Naive thymus-derived CD4-positive, alpha-beta T cell (primary cell): ENCODE measurements at regions of chr6 and their contacts with region 1.

Region 1: DNA sequence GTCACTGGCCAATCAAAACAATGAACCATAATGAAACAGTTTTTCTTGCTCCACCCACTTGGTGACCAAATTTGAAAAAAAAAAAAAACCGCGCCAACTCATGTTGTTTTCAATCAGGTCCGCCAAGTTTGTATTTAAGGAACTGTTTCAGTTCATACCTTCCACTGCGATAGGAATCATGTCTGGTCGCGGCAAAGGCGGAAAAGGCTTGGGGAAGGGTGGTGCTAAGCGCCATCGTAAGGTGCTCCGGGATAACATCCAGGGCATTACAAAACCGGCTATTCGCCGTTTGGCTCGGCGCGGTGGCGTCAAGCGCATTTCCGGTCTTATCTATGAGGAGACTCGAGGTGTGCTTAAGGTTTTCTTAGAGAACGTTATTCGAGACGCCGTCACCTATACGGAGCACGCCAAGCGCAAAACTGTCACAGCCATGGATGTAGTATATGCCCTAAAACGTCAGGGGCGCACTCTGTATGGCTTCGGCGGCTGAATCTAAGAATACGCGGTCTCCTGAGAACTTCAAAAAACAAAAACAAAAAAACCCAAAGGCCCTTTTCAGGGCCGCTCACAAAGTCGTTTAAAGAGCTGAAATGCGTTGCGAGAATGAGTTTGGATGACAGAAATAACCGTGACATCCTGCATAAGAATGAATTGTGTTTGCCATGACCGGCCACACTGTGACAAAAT is 16.7 kb downstream of the HFE start:
- DNase-seq: peak; percentile 83 to 96 (median 95)
- ATAC-seq: peak; percentile 94
- H3K4me3 ChIP-seq: peak overlapping the region; percentile 40
- H3K4me3 Mint-ChIP-seq: peak overlapping the region; percentile 81 to 97 (median 89)
- H3K27ac ChIP-seq: peak overlapping the region; percentile 75
- H3K27ac Mint-ChIP-seq: peak overlapping the region; percentile 96 to 100 (median 98)
- H3K4me1 ChIP-seq: peaks cover 4 to 12% of the 10 kb centered on the region in 2 donors
- H3K4me1 Mint-ChIP-seq: peaks cover 7 to 25% (median 22%) of the 10 kb centered on the region in 7 donors
- H3K27me3 ChIP-seq: no peaks in the 10 kb centered on the region
- H3K27me3 Mint-ChIP-seq: peaks cover 0 to 3% (median 0%) of the 10 kb centered on the region in 5 donors

Region 2: DNA sequence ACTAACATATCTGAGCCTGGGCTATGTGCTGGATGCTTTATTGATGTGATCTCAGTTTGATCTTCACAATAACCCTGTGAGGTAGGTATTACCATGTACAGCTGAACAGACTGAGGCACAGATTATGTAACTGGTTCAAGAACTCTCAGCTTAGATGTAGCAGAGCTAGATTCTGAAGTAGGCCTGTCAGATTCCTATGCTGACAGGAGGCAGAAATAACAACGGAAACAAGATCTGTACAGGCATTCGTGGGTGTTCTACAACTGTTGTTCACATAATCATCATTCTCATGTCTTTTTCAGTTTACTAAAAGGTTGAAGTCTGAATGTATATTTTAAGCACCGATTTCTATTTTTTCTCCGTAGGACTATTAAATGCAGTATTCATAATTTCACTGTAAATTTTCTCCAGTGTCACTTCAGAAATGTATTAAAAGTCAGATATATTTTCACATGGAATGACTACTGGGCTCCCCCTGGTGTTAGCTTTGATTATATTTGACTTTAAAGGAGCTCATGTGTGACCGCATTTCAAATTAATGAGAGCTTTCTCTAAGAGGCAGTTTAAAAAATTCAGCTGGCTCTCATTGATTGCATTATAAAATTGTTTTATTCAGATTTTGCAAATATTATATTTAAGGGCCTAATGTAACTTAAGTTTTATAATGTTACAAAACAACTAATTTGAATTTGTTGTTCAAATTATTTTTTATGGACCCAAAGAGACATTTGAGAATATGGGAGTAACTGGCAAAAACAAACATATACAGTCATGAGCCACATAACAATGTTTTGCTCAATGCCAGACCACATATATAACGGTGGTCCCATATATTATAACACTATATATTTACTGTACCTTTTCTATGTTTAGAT is 385.8 kb before region 1 on chr6:
- CTCF ChIA-PET with region 1: no interaction called
- POLR2A ChIA-PET with region 1: no interaction called
- intact Hi-C with region 1: no loop called
- DNase-seq: peak in 4 of 9 donors; percentile 4 to 14 (median 10)
- ATAC-seq: no peak
- H3K4me3 ChIP-seq: no peak overlapping the region
- H3K4me3 Mint-ChIP-seq: no peak overlapping the region
- H3K27ac ChIP-seq: no peak overlapping the region
- H3K27ac Mint-ChIP-seq: no peak overlapping the region
- H3K4me1 ChIP-seq: no peaks in the 10 kb centered on the region
- H3K4me1 Mint-ChIP-seq: no peaks in the 10 kb centered on the region
- H3K27me3 ChIP-seq: no peaks in the 10 kb centered on the region
- H3K27me3 Mint-ChIP-seq: peaks cover 0 to 32% (median 12%) of the 10 kb centered on the region in 5 donors

Region 3: GRCh38 chr6:26054857-26055669 is 48.9 kb before region 1 on chr6:
- CTCF ChIA-PET with region 1: interaction called, 232 read pairs
- POLR2A ChIA-PET with region 1: interaction called, 298 read pairs
- intact Hi-C with region 1: loop called (anchors 2 kb)
- DNase-seq: peak; percentile 54 to 94 (median 90)
- ATAC-seq: peak; percentile 81
- H3K4me3 ChIP-seq: peak overlapping the region; percentile 93
- H3K4me3 Mint-ChIP-seq: peak overlapping the region; percentile 88 to 99 (median 95)
- H3K27ac ChIP-seq: peak overlapping the region; percentile 83
- H3K27ac Mint-ChIP-seq: peak overlapping the region; percentile 95 to 99 (median 98)
- H3K4me1 ChIP-seq: peaks cover 0 to 14% of the 10 kb centered on the region in 2 donors
- H3K4me1 Mint-ChIP-seq: peaks cover 9 to 52% (median 10%) of the 10 kb centered on the region in 7 donors
- H3K27me3 ChIP-seq: no peaks in the 10 kb centered on the region
- H3K27me3 Mint-ChIP-seq: peaks cover 0 to 10% (median 0%) of the 10 kb centered on the region in 5 donors

Region 4: GRCh38 chr6:26087284-26088115 is 16.4 kb before region 1 on chr6 and contains the start of gene HFE:
- CTCF ChIA-PET with region 1: interaction called, 63 read pairs
- POLR2A ChIA-PET with region 1: interaction called, 44 read pairs
- intact Hi-C with region 1: no loop called
- DNase-seq: peak in 8 of 9 donors; percentile 32 to 46 (median 38)
- ATAC-seq: peak; percentile 41
- H3K4me3 ChIP-seq: peak within 1 kb of the TSS; percentile 88
- H3K4me3 Mint-ChIP-seq: peak within 1 kb of the TSS; percentile 84 to 91 (median 88)
- H3K27ac ChIP-seq: peak within 1 kb of the TSS; percentile 72
- H3K27ac Mint-ChIP-seq: peak within 1 kb of the TSS; percentile 73 to 91 (median 84)
- H3K4me1 ChIP-seq: peaks cover 18 to 23% of the 10 kb centered on the region in 2 donors
- H3K4me1 Mint-ChIP-seq: peaks cover 31 to 51% (median 39%) of the 10 kb centered on the region in 7 donors
- H3K27me3 ChIP-seq: no peaks in the 10 kb centered on the region
- H3K27me3 Mint-ChIP-seq: peaks cover 0 to 5% (median 5%) of the 10 kb centered on the region in 5 donors
- total RNA-seq, gene HFE: 1.5 to 4.6 (median 2.5) TPM

Region 5: GRCh38 chr6:26115226-26115625 is 11.3 kb after region 1 on chr6:
- CTCF ChIA-PET with region 1: no interaction called
- POLR2A ChIA-PET with region 1: interaction called, 55 read pairs
- intact Hi-C with region 1: no loop called
- DNase-seq: no peak
- ATAC-seq: no peak
- H3K4me3 ChIP-seq: no peak overlapping the region
- H3K4me3 Mint-ChIP-seq: peak overlapping the region in 1 of 10 donors; percentile 61
- H3K27ac ChIP-seq: no peak overlapping the region
- H3K27ac Mint-ChIP-seq: peak overlapping the region in 1 of 9 donors; percentile 72
- H3K4me1 ChIP-seq: peaks cover 0 to 7% of the 10 kb centered on the region in 2 donors
- H3K4me1 Mint-ChIP-seq: peaks cover 5 to 15% (median 9%) of the 10 kb centered on the region in 7 donors
- H3K27me3 ChIP-seq: no peaks in the 10 kb centered on the region
- H3K27me3 Mint-ChIP-seq: peaks cover 0 to 5% (median 0%) of the 10 kb centered on the region in 5 donors

Region 6: GRCh38 chr6:26183581-26184366 is 79.9 kb after region 1 on chr6:
- CTCF ChIA-PET with region 1: no interaction called
- POLR2A ChIA-PET with region 1: interaction called, 19 read pairs
- intact Hi-C with region 1: no loop called
- DNase-seq: peak; percentile 43 to 83 (median 77)
- ATAC-seq: peak; percentile 91
- H3K4me3 ChIP-seq: peak overlapping the region; percentile 82
- H3K4me3 Mint-ChIP-seq: peak overlapping the region; percentile 84 to 99 (median 98)
- H3K27ac ChIP-seq: peak overlapping the region; percentile 76
- H3K27ac Mint-ChIP-seq: peak overlapping the region; percentile 83 to 99 (median 90)
- H3K4me1 ChIP-seq: peaks cover 13 to 30% of the 10 kb centered on the region in 2 donors
- H3K4me1 Mint-ChIP-seq: peaks cover 19 to 59% (median 49%) of the 10 kb centered on the region in 7 donors
- H3K27me3 ChIP-seq: no peaks in the 10 kb centered on the region
- H3K27me3 Mint-ChIP-seq: no peaks in the 10 kb centered on the region

Region 7: GRCh38 chr6:26249957-26250697 is 146.2 kb after region 1 on chr6:
- CTCF ChIA-PET with region 1: no interaction called
- POLR2A ChIA-PET with region 1: interaction called, 9 read pairs
- intact Hi-C with region 1: loop called in 1 of 2 experiments (anchors 1 kb)
- DNase-seq: peak; percentile 53 to 85 (median 80)
- ATAC-seq: peak; percentile 85
- H3K4me3 ChIP-seq: peak overlapping the region; percentile 84
- H3K4me3 Mint-ChIP-seq: peak overlapping the region; percentile 88 to 100 (median 96)
- H3K27ac ChIP-seq: peak overlapping the region; percentile 71
- H3K27ac Mint-ChIP-seq: peak overlapping the region; percentile 85 to 97 (median 94)
- H3K4me1 ChIP-seq: peaks cover 4 to 19% of the 10 kb centered on the region in 2 donors
- H3K4me1 Mint-ChIP-seq: peaks cover 20 to 48% (median 39%) of the 10 kb centered on the region in 7 donors
- H3K27me3 ChIP-seq: no peaks in the 10 kb centered on the region
- H3K27me3 Mint-ChIP-seq: no peaks in the 10 kb centered on the region

Region 8: DNA sequence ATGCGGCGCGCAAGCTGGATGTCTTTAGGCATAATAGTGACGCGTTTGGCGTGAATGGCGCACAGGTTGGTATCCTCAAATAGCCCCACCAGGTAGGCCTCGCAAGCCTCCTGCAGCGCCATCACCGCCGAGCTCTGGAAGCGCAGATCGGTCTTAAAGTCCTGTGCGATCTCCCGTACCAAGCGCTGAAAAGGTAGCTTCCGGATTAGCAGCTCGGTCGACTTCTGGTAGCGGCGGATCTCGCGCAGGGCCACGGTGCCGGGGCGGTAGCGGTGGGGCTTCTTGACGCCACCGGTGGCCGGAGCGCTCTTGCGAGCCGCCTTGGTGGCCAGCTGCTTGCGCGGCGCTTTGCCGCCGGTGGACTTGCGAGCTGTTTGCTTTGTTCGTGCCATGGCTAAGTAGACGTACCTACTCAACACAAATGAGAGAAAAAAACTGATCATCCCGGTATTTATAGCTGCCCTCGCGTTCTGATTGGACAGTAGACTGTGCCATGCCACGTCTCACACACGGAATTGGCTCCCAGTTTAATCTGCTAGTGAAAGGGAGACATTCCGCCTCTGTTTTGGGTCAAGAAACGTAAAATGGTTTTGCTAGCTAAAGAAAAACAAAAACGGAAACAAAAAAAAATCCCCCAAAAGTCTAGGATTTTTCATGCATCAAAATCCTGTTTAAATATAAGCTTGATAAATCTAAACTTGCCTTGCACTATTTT is 1768.2 kb after region 1 on chr6:
- CTCF ChIA-PET with region 1: no interaction called
- POLR2A ChIA-PET with region 1: interaction called, 7 read pairs
- intact Hi-C with region 1: loop called in 1 of 2 experiments (anchors 5 kb)
- DNase-seq: peak; percentile 68 to 97 (median 94)
- ATAC-seq: peak; percentile 88
- H3K4me3 ChIP-seq: peak overlapping the region; percentile 69
- H3K4me3 Mint-ChIP-seq: peak overlapping the region; percentile 83 to 99 (median 94)
- H3K27ac ChIP-seq: peak overlapping the region; percentile 84
- H3K27ac Mint-ChIP-seq: peak overlapping the region; percentile 95 to 98 (median 97)
- H3K4me1 ChIP-seq: peaks cover under 1 to 19% of the 10 kb centered on the region in 2 donors
- H3K4me1 Mint-ChIP-seq: peaks cover 15 to 69% (median 42%) of the 10 kb centered on the region in 7 donors
- H3K27me3 ChIP-seq: no peaks in the 10 kb centered on the region
- H3K27me3 Mint-ChIP-seq: peaks cover 0 to 8% (median 0%) of the 10 kb centered on the region in 5 donors